HEK293 (cell line): ENCODE measurements at regions of chr9 and their contacts with region 1.

Region 1: GRCh38 chr9:137240861-137241489 is at the start of gene TUBB4B:
- H3K4me3 ChIP-seq: peak within 1 kb of the TSS; percentile 83
- H3K27ac ChIP-seq: peak within 1 kb of the TSS; percentile 93
- H3K4me1 ChIP-seq: peaks cover 6% of the 10 kb centered on the region; the same call in 1 of the 2 replicates
- CTCF ChIP-seq: no peak

Region 2: GRCh38 chr9:136903041-136903554 is 337.9 kb before region 1 on chr9:
- CTCF ChIA-PET with region 1: no interaction called
- POLR2A ChIA-PET with region 1: no interaction called
- H3K4me3 ChIP-seq: no peak overlapping the region
- H3K27ac ChIP-seq: no peak overlapping the region
- H3K4me1 ChIP-seq: no peaks in the 10 kb centered on the region
- CTCF ChIP-seq: no peak

Region 3: DNA sequence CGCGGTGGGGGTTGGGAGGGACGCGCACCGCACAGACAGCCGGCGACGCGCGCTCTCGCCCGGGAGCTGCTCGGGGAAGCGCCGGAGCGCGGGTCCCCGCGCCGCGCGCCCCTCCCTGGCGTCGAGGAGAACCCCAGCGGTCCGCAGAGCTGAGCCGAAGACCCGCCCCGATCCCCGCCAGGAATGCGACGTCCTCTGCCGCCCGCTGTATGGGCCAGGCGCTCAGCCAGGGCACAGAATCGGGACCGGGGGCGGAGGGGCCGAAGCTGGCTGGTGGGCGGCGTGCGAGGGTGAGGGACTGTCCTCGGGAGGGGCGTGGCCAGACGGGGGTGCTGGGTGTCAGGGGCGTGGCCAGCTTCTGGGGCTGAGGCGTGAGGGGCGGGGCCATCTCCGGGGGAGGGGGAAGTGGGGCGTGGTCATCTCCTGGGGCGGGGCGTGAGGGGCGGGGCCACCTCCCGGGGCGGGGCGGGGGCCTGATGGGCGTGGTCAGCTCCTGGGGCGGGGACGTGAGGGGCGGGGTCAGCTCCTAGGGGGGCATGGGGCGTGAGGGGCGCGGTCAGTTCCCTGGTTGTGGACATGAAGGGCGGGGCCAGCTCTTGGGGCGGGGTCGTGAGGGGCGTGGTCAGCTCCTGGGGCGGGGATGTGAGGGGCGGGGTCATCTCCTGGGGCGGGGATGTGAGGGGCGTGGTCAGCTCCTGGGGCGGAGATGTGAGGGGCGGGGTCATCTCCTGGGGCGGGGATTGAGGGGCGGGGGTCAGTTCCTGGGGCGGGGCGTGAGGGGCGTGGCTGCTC is 262.7 kb before region 1 on chr9:
- CTCF ChIA-PET with region 1: no interaction called
- POLR2A ChIA-PET with region 1: no interaction called
- H3K4me3 ChIP-seq: no peak overlapping the region
- H3K27ac ChIP-seq: no peak overlapping the region
- H3K4me1 ChIP-seq: no peaks in the 10 kb centered on the region
- CTCF ChIP-seq: no peak

Region 4: GRCh38 chr9:137046098-137046787 is 194.7 kb before region 1 on chr9 and contains the start of gene NPDC1:
- CTCF ChIA-PET with region 1: interaction called, 12 read pairs
- POLR2A ChIA-PET with region 1: interaction called, 5 read pairs
- H3K4me3 ChIP-seq: peak within 1 kb of the TSS; percentile 58
- H3K27ac ChIP-seq: peak within 1 kb of the TSS; percentile 79; the same call in 1 of the 2 replicates
- H3K4me1 ChIP-seq: peaks cover 5% of the 10 kb centered on the region; the same call in 1 of the 2 replicates
- CTCF ChIP-seq: peak; percentile 87

Region 5: GRCh38 chr9:137129456-137130175 is 111.4 kb before region 1 on chr9:
- CTCF ChIA-PET with region 1: interaction called, 14 read pairs
- POLR2A ChIA-PET with region 1: interaction called, 47 read pairs
- H3K4me3 ChIP-seq: peak overlapping the region; percentile 88
- H3K27ac ChIP-seq: peak overlapping the region; percentile 66
- H3K4me1 ChIP-seq: no peaks in the 10 kb centered on the region
- CTCF ChIP-seq: no peak

Region 6: DNA sequence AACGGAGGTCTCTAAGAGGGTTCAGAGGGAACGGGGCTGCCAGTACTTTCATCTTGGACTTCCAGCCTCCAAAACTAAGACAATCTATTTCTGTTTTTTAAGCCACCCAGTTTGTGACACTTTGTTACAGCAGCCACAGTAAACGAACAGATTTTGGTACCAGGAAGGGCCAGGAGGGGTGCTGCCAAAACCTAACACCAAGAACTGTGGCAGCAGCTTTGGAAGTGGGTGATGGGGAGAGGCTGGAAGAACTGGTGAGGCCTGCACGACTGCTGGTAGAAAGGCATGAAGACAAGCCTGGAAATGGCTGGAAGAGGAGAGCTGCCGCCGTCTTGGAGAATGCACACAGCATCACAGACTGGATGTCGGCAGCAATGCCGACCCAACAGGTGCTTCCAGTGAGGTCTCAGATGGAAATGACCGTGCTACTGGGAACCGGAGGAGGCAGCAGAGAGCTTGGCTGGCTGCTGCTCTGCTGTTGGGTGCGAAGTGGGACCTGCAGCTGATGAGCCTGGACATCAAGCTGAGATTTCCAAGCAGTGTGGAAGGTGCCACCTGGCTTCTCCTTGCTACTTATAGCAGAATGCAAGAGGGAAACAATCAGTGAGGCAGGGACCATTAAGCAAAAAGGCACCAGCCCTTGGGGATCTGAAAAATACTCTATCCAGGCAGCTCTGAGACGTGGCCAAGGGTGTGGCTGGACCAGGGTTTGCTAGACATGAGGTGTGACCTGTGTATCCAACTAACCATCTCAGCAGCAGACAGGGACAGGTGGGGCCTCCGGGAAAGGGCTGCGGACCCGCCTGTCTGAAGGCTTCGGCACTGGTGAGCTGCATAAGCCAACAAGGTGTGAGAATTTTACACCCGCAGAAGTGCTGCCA is 64.4 kb before region 1 on chr9:
- CTCF ChIA-PET with region 1: interaction called, 12 read pairs
- POLR2A ChIA-PET with region 1: interaction called, 10 read pairs
- H3K4me3 ChIP-seq: no peak overlapping the region
- H3K27ac ChIP-seq: no peak overlapping the region
- H3K4me1 ChIP-seq: no peaks in the 10 kb centered on the region
- CTCF ChIP-seq: peak; percentile 64

Region 7: DNA sequence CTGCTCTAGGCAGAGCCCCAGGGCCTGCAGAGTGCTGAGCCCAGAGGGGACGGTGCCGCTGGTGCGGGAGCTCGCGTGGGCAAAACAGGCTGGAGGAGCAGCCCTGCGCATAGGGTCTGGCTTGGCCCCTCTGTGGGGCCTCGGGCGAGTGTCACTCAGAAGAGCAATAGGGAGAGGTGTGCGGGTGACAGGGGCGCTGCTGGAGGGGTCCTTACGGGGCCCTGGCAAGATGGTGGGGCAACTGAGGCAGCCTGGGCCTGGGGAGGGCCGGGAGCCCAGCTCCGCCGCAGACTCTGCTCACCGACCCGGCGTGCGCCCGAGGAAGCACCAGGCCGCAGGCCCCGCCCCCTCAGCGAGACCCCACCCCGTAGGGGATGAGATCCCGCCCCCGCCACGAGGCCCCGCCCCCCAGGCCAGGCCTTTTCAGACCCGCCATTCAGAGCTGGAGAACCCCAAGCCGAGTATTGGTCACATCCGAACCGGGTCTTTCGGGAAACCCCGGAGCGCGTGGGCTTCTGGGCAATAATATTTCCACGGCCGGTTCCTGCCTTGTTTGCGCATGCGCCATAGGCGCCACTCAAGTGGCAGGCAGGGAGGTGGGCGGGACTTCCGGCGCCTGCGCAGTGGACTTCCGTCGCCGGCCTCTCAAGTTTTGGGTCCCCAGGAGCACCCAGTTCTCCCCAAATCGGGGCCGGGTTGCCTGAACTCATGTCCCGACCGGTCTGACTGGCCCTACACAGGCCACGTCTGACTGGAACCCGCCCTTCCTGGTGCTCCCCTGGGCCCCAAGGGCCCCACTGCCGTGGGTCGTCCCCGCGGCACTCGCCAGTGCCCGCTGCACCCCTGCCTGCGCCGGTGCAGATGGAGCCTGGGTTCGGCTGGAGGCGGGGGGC is 17.7 kb before region 1 on chr9:
- CTCF ChIA-PET with region 1: interaction called, 25 read pairs
- POLR2A ChIA-PET with region 1: interaction called, 234 read pairs
- H3K4me3 ChIP-seq: peak overlapping the region; percentile 89
- H3K27ac ChIP-seq: peak overlapping the region; percentile 83
- H3K4me1 ChIP-seq: peaks cover 4% of the 10 kb centered on the region
- CTCF ChIP-seq: no peak

Region 8: DNA sequence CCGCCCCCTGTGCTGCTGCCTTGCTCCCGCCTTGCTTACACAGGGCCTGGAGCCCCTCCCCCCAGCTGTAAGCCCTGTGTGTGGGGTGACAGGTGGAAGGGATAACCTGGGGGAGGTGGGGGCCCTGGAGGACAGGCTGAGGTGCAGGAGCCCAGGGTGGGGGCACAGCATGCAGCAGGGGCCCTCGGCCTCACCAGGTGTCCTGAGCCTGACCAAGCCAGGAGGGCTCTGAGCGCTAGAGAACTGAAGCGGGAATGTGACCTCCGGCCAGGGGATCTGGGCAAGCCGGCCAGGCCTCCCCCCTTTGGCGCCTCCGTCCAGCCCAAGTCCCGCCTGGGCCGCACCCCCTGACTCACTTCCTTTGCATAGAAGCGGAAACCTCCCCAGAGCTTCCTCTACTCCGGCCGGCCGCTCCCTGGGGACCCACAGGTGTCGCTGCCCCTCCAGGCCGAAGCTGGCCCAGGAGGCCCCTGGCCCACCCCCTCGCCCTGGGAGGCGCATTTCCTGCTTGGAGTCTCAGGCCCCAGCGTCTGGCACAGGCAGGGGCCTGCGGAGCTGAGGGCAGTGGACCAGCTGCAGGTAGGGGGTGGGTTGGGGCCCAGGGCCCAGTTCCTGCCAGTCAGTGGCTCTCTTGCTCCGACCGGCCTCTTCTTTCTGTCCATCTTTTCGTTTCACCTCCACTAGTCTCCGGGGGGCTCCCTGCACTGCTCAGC is 36.5 kb after region 1 on chr9 and contains the start of gene TOR4A:
- CTCF ChIA-PET with region 1: interaction called, 7 read pairs
- POLR2A ChIA-PET with region 1: interaction called, 12 read pairs
- H3K4me3 ChIP-seq: peak within 1 kb of the TSS; percentile 43
- H3K27ac ChIP-seq: no peak within 1 kb of the TSS; the same call in 1 of the 2 replicates
- H3K4me1 ChIP-seq: 0 out of 2 replicates have a peak, but pooled peaks cover 4% of the 10 kb centered on the region
- CTCF ChIP-seq: no peak

Region 9: DNA sequence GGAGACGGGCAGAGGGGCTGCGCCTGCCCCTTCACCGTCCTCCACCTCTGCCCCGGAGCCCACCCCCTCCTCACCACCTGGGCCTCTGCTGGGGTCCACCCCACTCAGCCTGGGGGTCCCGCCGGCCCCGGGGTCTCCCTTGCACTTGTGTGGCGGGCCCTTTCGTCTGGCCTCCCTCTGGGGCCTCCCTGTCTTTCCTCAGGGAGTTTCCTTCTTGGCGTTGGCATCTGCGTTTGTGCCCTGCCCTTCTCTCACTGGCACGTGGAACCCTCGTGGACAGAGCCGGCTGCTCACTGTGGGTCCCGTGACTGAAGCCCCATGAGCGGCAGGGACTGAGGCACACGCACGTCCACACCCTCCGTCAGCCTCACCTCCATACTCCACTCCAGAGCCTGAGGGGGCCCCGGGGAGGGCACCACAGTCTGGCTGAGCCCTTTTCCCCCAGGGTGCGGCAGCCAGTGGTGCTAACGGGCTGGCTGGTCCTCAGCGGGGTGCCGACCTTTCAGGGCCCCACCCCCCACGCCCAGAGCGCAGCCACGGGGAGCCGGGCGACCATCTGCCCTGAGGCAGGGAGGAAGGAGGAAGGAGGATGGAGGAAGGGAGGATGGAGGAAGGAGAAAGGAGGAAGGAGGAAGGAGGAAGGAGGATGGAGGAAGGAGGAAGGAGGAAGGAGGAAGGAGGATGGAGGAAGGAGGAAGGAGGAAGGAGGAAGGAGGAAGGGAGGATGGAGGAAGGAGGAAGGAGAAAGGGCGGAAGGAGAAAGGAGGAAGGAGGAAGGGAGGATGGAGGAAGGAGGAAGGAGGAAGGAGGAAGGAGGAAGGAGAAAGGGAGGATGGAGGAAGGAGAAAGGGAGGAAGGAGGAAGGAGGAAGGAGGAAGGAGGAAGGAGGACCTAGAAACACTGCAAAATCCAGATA is 114.1 kb after region 1 on chr9:
- CTCF ChIA-PET with region 1: no interaction called
- POLR2A ChIA-PET with region 1: no interaction called
- H3K4me3 ChIP-seq: no peak overlapping the region
- H3K27ac ChIP-seq: no peak overlapping the region
- H3K4me1 ChIP-seq: no peaks in the 10 kb centered on the region
- CTCF ChIP-seq: no peak